CD8-positive, alpha-beta T cell (primary cell): ENCODE measurements at regions of chr13 and their contacts with region 1.

Region 1: DNA sequence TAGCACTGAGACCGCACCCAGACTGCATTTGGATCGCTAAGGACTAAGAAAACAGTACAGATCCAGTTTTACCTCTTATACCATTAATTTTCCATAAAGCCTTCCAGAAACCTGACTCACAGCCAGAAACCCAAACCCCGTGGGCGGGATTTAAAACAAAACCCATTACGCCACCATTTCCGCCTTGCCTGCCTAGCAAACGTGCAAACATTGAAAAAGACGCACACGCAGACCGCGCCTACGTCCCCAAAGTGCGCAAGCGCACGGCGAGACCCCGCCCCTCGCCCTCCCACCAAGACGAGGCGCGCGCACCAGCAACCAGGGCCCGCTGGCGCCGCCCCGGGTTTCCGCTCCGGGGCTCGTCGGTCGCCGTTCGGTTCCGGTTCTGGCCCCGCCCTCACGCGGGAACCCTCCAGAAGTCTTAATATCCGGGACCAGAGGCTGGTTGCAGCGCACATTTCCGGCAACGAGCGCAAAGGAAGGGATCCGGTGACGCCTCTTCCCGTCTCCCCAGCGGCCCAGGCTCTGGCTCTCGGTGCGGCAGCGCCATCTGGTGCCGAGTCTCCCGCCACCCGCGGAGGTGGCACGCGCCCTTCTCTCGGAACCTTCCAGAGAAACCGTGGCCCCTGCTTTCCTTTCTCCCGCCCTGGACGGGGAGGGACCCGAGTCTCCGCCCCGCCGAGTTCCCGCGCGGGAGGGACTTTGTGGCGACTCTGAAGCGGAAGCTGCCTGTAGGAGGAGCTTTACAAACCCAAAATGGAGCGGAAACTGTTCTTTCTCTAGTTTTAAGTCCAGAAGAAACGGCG is 256.9 kb upstream of the STARD13 start:
- DNase-seq: peak; percentile 97 to 100 (median 99)
- ATAC-seq: peak; percentile 79
- H3K4me3 ChIP-seq: peak overlapping the region; percentile 68 to 69
- H3K4me3 Mint-ChIP-seq: peak overlapping the region; percentile 91
- H3K27ac ChIP-seq: peak overlapping the region; percentile 95 to 96
- H3K27ac Mint-ChIP-seq: peak overlapping the region; percentile 99
- H3K4me1 ChIP-seq: peaks cover 28% of the 10 kb centered on the region
- H3K4me1 Mint-ChIP-seq: peaks cover 48% of the 10 kb centered on the region
- H3K27me3 ChIP-seq: no peaks in the 10 kb centered on the region
- H3K27me3 Mint-ChIP-seq: no peaks in the 10 kb centered on the region
- CTCF ChIP-seq: peak; percentile 77

Region 2: DNA sequence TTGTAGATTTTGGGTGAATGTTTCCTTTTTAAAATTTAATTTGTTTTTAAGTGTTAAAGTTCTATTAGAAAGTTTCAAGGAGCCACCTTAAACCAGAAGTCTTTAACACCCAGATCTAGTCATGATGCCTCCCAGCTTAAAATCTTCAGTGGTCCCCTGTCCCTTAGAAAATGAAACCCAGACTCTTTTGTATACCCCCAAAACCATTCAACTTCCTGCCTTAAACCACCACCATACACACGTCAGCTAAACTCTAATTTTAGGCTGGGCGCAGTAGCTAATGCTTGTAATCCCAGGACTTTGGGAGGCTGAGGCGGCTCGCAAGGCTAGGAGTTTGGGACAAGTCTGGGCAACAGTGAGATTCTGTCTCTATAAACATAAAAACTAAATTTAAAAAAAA is 1152.4 kb before region 1 on chr13:
- CTCF ChIA-PET with region 1: no interaction called
- POLR2A ChIA-PET with region 1: no interaction called
- intact Hi-C with region 1: loop called in 1 of 2 experiments (anchors 10 kb)
- DNase-seq: peak in 3 of 9 experiments; percentile 23 to 71 (median 47)
- ATAC-seq: peak; percentile 91
- H3K4me3 ChIP-seq: no peak overlapping the region
- H3K4me3 Mint-ChIP-seq: peak overlapping the region; percentile 27
- H3K27ac ChIP-seq: peak overlapping the region in 1 of 2 experiments; percentile 42
- H3K27ac Mint-ChIP-seq: peak overlapping the region; percentile 10
- H3K4me1 ChIP-seq: peaks cover 23% of the 10 kb centered on the region
- H3K4me1 Mint-ChIP-seq: peaks cover 23% of the 10 kb centered on the region
- H3K27me3 ChIP-seq: no peaks in the 10 kb centered on the region
- H3K27me3 Mint-ChIP-seq: no peaks in the 10 kb centered on the region
- CTCF ChIP-seq: no peak

Region 3: DNA sequence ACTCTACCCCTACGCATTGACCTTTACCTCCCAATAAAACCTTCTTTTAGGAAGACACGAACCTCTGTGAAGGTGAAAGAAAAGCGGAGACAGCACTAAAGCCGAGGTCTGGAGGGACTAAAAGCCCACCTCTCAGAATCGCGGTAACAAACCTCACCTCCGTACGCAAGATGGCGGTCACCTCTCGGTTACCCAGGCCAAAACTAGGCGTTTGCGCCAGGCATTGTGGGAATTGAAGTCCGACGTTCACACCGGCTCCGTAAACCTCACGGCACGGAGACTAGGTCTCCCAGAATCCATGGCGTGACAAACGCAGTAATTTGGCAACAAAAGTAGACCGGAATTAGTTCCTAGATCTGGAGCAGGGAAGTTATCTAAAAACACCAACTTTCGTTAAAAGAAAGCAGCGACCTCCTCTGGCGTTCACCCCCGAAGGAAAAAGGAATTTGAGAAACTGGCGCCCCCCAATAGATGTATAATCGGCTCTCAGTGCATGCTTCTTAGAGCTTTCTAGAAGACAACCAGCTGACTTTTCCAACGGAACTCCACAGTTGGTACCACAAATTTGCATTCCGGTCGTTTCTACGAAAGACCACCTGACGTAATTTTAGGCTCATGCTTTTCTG is 1003.8 kb before region 1 on chr13 and contains the start of gene N4BP2L2:
- CTCF ChIA-PET with region 1: no interaction called
- POLR2A ChIA-PET with region 1: no interaction called
- intact Hi-C with region 1: loop called (anchors 1 kb)
- DNase-seq: peak; percentile 82 to 97 (median 92)
- ATAC-seq: peak; percentile 95
- H3K4me3 ChIP-seq: peak within 1 kb of the TSS; percentile 78 to 91
- H3K4me3 Mint-ChIP-seq: peak within 1 kb of the TSS; percentile 99
- H3K27ac ChIP-seq: peak within 1 kb of the TSS; percentile 93 to 97
- H3K27ac Mint-ChIP-seq: peak within 1 kb of the TSS; percentile 100
- H3K4me1 ChIP-seq: peaks cover 37% of the 10 kb centered on the region
- H3K4me1 Mint-ChIP-seq: peaks cover 38% of the 10 kb centered on the region
- H3K27me3 ChIP-seq: no peaks in the 10 kb centered on the region
- H3K27me3 Mint-ChIP-seq: peaks cover 2% of the 10 kb centered on the region
- CTCF ChIP-seq: no peak
- total RNA-seq, gene N4BP2L2: 141 to 149 TPM

Region 4: DNA sequence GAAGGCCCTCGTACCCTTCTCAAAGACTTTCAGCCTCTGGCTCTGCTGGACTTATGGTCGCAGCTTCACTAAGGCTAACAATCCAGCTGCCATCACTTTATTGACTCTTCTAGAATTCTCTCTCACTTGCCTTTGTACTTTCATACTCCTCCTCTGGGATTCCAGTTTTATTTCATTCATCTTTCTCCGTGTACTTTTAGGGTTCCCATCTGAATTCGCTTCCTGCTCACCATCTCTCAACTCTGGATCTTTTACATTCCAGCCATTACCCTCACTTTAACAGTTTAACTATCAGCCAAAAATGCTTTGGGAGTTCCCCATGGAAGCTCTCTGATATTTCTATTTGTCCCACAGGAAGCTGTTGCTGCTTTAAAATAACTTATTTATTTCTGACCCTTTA is 675.6 kb before region 1 on chr13:
- CTCF ChIA-PET with region 1: no interaction called
- POLR2A ChIA-PET with region 1: no interaction called
- intact Hi-C with region 1: no loop called
- DNase-seq: no peak
- ATAC-seq: no peak
- H3K4me3 ChIP-seq: no peak overlapping the region
- H3K4me3 Mint-ChIP-seq: no peak overlapping the region
- H3K27ac ChIP-seq: no peak overlapping the region
- H3K27ac Mint-ChIP-seq: no peak overlapping the region
- H3K4me1 ChIP-seq: no peaks in the 10 kb centered on the region
- H3K4me1 Mint-ChIP-seq: no peaks in the 10 kb centered on the region
- H3K27me3 ChIP-seq: no peaks in the 10 kb centered on the region
- H3K27me3 Mint-ChIP-seq: no peaks in the 10 kb centered on the region
- CTCF ChIP-seq: no peak

Region 5: GRCh38 chr13:33017323-33017929 is 525.1 kb before region 1 on chr13:
- CTCF ChIA-PET with region 1: no interaction called
- POLR2A ChIA-PET with region 1: no interaction called
- intact Hi-C with region 1: loop called in 1 of 2 experiments (anchors 2 kb)
- DNase-seq: peak in 4 of 9 experiments; percentile 14 to 69 (median 44)
- ATAC-seq: peak; percentile 87
- H3K4me3 ChIP-seq: peak overlapping the region; percentile 28 to 42
- H3K4me3 Mint-ChIP-seq: peak overlapping the region; percentile 76
- H3K27ac ChIP-seq: no peak overlapping the region
- H3K27ac Mint-ChIP-seq: no peak overlapping the region
- H3K4me1 ChIP-seq: no peaks in the 10 kb centered on the region
- H3K4me1 Mint-ChIP-seq: peaks cover 12% of the 10 kb centered on the region
- H3K27me3 ChIP-seq: peaks cover 4 to 14% of the 10 kb centered on the region in 2 experiments
- H3K27me3 Mint-ChIP-seq: peaks cover 65% of the 10 kb centered on the region
- CTCF ChIP-seq: peak; percentile 35

Region 6: DNA sequence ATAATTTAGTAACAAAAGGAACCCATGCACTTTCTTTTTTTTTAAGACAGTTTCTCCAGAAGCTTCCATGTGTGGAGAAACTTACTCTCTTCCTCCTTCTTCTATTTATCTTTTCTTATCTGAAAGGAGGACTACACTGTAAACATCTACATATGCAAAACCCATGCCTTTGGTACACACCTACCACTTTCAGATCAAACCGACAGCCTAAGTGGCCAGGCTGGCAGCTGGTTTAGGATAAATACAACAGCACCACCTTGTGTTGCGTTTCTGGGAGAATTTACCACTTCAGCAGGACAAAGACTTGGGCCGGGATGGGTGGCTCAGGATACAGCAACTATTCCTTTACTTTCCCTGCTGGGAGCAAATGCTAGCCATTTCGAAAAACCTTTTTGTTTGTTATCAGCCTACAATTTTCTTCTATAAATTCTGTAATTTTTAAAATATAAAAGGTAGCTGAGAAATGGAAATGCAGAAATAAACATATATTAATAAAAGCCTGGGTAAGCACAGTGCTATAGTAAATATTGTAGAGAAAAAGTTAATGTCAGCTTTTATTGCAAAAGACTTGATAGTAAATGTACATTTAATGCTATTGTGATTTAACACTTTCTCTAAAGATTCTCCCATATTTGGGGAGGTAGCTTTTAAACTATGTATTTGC is 181.4 kb after region 1 on chr13:
- CTCF ChIA-PET with region 1: interaction called, 15 read pairs
- POLR2A ChIA-PET with region 1: no interaction called
- intact Hi-C with region 1: loop called (anchors 1 to 5 kb)
- DNase-seq: peak; percentile 21 to 82 (median 56)
- ATAC-seq: peak; percentile 84
- H3K4me3 ChIP-seq: no peak overlapping the region
- H3K4me3 Mint-ChIP-seq: no peak overlapping the region
- H3K27ac ChIP-seq: no peak overlapping the region
- H3K27ac Mint-ChIP-seq: no peak overlapping the region
- H3K4me1 ChIP-seq: peaks cover 6% of the 10 kb centered on the region
- H3K4me1 Mint-ChIP-seq: peaks cover 13% of the 10 kb centered on the region
- H3K27me3 ChIP-seq: no peaks in the 10 kb centered on the region
- H3K27me3 Mint-ChIP-seq: no peaks in the 10 kb centered on the region
- CTCF ChIP-seq: peak; percentile 65